HEK293 (cell line): ENCODE measurements at regions of chr9 and their contacts with region 1.

Region 1: DNA sequence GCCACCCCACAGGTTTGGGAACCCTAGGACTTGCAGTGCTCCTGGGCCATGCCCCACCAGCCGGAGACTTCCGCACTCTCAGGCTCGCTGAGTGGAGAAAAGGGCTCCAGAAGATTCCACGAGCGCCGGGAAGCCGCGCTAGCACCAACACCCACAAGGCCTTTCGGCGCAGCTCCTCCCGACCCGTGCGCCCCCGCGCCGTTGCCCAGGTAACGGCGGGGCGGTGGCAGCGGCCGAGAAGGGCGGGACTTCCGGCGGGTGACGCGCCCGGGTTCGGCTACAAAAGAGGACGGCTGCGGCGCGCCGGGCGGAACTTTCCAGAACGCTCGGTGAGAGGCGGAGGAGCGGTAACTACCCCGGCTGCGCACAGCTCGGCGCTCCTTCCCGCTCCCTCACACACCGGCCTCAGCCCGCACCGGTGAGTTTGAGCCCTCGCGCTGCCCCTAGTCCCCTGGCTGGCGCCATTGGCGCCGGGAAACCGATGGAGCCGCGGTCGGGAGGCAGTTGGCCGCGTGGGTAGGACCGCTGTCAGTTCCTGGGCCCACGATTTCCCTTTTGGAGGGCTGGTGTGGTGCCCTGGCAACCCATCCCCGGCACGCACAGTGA is at the start of gene DNAJA1:
- H3K4me3 ChIP-seq: peak within 1 kb of the TSS; percentile 77
- H3K27ac ChIP-seq: peak within 1 kb of the TSS; percentile 94
- H3K4me1 ChIP-seq: no peaks in the 10 kb centered on the region; the same call in 1 of the 2 replicates
- CTCF ChIP-seq: no peak; the same call in 1 of the 2 replicates

Region 2: GRCh38 chr9:32526041-32526706 is 498.9 kb before region 1 on chr9 and contains the start of gene RIGI:
- CTCF ChIA-PET with region 1: interaction called, 3 read pairs
- POLR2A ChIA-PET with region 1: interaction called, 12 read pairs
- H3K4me3 ChIP-seq: peak within 1 kb of the TSS; percentile 53
- H3K27ac ChIP-seq: peak within 1 kb of the TSS; percentile 69
- H3K4me1 ChIP-seq: peaks cover 4% of the 10 kb centered on the region; the same call in 1 of the 2 replicates
- CTCF ChIP-seq: peak; percentile 10; the same call in 1 of the 2 replicates

Region 3: GRCh38 chr9:32839013-32839885 is 185.8 kb before region 1 on chr9:
- CTCF ChIA-PET with region 1: no interaction called
- POLR2A ChIA-PET with region 1: no interaction called
- H3K4me3 ChIP-seq: no peak overlapping the region
- H3K27ac ChIP-seq: no peak overlapping the region
- H3K4me1 ChIP-seq: no peaks in the 10 kb centered on the region
- CTCF ChIP-seq: no peak

Region 4: GRCh38 chr9:32992595-32993238 is 32.4 kb before region 1 on chr9:
- CTCF ChIA-PET with region 1: no interaction called
- POLR2A ChIA-PET with region 1: interaction called, 18 read pairs
- H3K4me3 ChIP-seq: no peak overlapping the region
- H3K27ac ChIP-seq: no peak overlapping the region
- H3K4me1 ChIP-seq: peaks cover 10% of the 10 kb centered on the region
- CTCF ChIP-seq: no peak

Region 5: GRCh38 chr9:33044127-33044673 is 19.1 kb after region 1 on chr9:
- CTCF ChIA-PET with region 1: interaction called, 5 read pairs
- POLR2A ChIA-PET with region 1: interaction called, 78 read pairs
- H3K4me3 ChIP-seq: peak overlapping the region; percentile 62
- H3K27ac ChIP-seq: peak overlapping the region; percentile 71
- H3K4me1 ChIP-seq: no peaks in the 10 kb centered on the region; the same call in 1 of the 2 replicates
- CTCF ChIP-seq: no peak

Region 6: DNA sequence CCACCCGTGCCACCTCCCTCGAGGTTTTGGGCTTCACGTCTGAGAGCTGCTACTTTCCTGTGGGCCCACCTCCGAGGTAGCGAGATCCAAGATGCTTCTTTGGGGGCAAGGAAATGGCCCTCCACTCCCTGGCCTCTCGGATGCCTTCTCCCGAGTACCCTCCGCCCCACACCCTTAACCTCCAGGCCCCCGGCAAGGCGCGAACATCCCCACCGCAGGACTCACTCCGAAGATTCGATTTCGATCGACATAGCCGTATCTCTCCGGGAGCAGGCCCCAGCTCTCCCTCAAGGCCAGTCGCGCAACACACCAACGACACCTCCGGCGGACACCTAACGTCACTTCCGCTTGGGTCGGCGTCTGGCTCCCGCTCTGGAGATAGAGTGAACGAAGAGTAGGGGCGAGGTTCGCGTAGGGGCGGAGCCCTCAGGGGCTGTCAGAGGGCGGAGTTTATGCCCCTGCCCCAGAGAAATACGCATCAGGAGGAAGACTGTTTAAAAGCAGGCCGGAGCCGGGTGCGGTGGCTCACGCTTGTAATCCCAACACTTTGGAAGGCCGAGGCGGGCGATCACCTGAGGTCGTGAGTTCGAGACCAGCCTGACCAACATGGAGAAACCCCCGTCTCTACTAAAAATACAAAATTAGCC is 51.4 kb after region 1 on chr9 and contains the start of gene SMU1:
- CTCF ChIA-PET with region 1: no interaction called
- POLR2A ChIA-PET with region 1: interaction called, 20 read pairs
- H3K4me3 ChIP-seq: peak within 1 kb of the TSS; percentile 75
- H3K27ac ChIP-seq: peak within 1 kb of the TSS; percentile 51
- H3K4me1 ChIP-seq: no peaks in the 10 kb centered on the region
- CTCF ChIP-seq: no peak

Region 7: DNA sequence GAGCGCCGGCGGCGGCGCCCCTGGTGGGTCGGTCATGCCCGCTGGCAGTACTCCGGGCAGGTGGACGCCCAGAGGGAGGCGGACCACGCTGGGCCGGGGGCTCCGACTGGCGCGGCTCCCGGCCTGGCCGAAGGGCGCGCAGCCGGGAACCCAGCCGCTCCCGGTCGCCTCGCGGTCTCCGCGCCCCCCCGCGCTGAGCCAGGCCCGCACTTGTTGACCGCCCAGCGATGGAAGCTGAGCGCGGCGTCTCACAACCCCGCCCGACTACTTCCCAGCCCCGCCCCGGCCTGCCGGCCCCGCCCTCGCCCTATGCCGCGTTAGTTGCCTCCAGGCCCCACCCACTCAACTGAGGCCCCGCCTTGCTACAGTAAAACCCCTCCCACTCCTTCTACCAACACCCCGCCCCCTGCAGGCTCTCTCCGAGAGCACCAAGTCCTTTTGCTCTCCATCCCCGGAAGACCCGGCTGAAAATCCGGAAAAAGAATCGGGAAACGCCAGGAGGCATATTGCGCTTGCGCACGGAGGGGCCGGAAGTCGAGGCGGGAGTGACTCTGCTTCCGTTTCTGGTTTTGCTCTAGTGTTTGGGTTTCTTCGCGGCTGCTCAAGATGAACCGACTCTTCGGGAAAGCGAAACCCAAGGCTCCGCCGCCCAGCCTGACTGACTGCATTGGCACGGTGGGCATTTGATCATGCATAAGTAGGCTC is 239.6 kb after region 1 on chr9 and contains the starts of genes BAG1 and CHMP5:
- CTCF ChIA-PET with region 1: no interaction called
- POLR2A ChIA-PET with region 1: interaction called, 16 read pairs
- H3K4me3 ChIP-seq: peak within 1 kb of the TSS; percentile 90
- H3K27ac ChIP-seq: peak within 1 kb of the TSS; percentile 77; the same call in 1 of the 2 replicates
- H3K4me1 ChIP-seq: peaks cover 3% of the 10 kb centered on the region; the same call in 1 of the 2 replicates
- CTCF ChIP-seq: no peak; the same call in 1 of the 2 replicates

Region 8: DNA sequence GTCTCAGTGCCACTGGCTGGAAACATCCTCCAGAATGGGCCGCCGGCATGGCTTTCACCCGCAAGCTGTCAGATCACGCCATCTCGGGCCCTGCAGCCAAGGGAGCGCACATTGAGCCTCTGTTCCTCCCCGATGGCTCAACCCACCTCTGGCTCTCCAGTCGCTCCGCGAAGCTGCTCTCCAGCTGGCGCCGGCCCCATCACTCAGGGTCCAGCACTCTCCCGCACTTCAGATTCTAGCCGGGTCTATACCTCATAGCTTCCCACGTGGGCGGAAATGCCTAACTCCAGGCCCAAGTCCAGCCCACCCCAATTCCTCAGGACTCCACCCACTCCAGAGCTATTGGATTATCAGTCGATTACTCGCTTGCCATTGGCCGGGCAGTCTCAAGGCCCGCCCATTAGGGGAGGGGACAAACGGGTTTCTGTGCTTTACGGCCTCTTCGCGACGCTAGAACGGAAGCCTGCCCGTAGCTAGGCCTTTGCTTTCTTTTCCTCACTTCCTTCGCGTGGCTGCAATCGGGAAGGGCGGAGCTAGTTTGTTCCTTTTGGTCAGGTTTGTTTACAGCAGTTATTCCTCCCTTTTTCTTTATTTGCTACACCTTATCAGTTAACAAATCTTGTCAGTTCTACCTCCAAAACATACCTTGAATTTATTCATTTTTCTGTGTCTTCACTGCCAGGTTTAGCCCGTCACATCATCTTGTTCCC is 448.7 kb after region 1 on chr9 and contains the start of gene NOL6:
- CTCF ChIA-PET with region 1: no interaction called
- POLR2A ChIA-PET with region 1: interaction called, 12 read pairs
- H3K4me3 ChIP-seq: peak within 1 kb of the TSS; percentile 91
- H3K27ac ChIP-seq: no peak within 1 kb of the TSS
- H3K4me1 ChIP-seq: no peaks in the 10 kb centered on the region
- CTCF ChIP-seq: no peak